ENCODE measurements at regions of chr7 and their contacts with region 1.

Region 1: GRCh38 chr7:12524794-12525386 is 45.6 kb upstream of the SCIN start:
- DNase-seq: peak; percentile 28
- H3K27ac ChIP-seq: no peak overlapping the region
- CTCF ChIP-seq: peak; percentile 67

Region 2: GRCh38 chr7:12623897-12624498 is 99.1 kb after region 1 on chr7:
- CTCF ChIA-PET with region 1: interaction called, 31 read pairs
- POLR2A ChIA-PET with region 1: no interaction called
- DNase-seq: peak; percentile 26
- H3K27ac ChIP-seq: no peak overlapping the region
- CTCF ChIP-seq: peak; percentile 89

Measured in RWPE1 (cell line).